Dendritic cell treated with granulocyte-macrophage colony-stimulating factor and Interleukin-4, amounts not matched to agents 40 ng/mL and 50 ng/mL, for 4 days (primary cell): ENCODE measurements at regions of chr7 and their contacts with region 1.

Region 1: GRCh38 chr7:134126966-134127848 is at the start of gene LRGUK:
- H3K4me3 Mint-ChIP-seq: peak within 1 kb of the TSS; percentile 73
- H3K27ac Mint-ChIP-seq: no peak within 1 kb of the TSS
- H3K4me1 Mint-ChIP-seq: peaks cover 32% of the 10 kb centered on the region
- H3K27me3 Mint-ChIP-seq: peaks cover 12% of the 10 kb centered on the region

Region 2: DNA sequence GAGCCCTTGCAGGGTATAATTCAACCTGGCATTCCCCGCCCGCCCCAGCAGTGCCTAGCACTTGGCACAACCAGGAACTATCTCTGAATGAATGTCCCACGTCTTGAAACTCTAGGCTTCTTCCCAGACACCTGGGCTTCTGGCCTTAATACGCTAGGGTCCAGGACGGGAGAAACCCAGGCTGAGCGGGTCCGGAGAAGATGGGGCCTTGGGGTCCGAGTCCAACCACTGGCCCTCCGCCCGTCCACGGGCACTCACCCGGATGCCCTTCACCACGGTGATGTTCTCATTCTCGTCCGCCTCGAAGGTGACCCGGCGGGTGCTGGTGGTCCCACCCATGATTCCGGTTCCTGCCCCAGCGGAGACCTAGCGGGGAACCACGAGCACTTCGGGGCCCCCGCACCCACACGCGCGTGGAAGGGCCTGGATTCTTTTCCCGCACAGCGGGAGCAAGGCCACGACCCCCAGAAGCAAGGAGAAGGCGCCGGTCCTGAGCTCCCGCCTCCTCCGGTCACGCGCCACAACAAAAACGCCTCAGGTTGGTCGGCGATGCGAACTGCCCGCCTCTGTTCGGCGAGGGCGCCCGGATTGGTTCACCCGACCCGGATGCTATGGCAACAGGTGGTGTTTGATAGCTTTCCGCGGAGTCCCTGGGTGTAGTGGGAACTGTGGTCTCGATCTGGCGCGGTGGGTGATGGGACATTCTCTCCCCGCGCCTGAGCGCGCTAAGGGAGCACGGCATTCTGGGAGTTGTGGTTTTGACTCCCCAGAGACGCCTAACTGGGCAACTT is 1045.4 kb before region 1 on chr7 and contains the start of gene CHCHD3:
- intact Hi-C with region 1: loop called (anchors 5 kb)
- H3K4me3 Mint-ChIP-seq: peak within 1 kb of the TSS; percentile 80
- H3K27ac Mint-ChIP-seq: peak within 1 kb of the TSS; percentile 93
- H3K4me1 Mint-ChIP-seq: peaks cover 19% of the 10 kb centered on the region
- H3K27me3 Mint-ChIP-seq: no peaks in the 10 kb centered on the region

Region 3: GRCh38 chr7:133252858-133253518 is 874.2 kb before region 1 on chr7 and contains the start of gene EXOC4:
- intact Hi-C with region 1: loop called (anchors 5 kb)
- H3K4me3 Mint-ChIP-seq: peak within 1 kb of the TSS; percentile 82
- H3K27ac Mint-ChIP-seq: peak within 1 kb of the TSS; percentile 97
- H3K4me1 Mint-ChIP-seq: peaks cover 26% of the 10 kb centered on the region
- H3K27me3 Mint-ChIP-seq: no peaks in the 10 kb centered on the region

Region 4: GRCh38 chr7:133936074-133936473 is 191.1 kb before region 1 on chr7:
- intact Hi-C with region 1: no loop called
- H3K4me3 Mint-ChIP-seq: no peak overlapping the region
- H3K27ac Mint-ChIP-seq: no peak overlapping the region
- H3K4me1 Mint-ChIP-seq: no peaks in the 10 kb centered on the region
- H3K27me3 Mint-ChIP-seq: no peaks in the 10 kb centered on the region

Region 5: DNA sequence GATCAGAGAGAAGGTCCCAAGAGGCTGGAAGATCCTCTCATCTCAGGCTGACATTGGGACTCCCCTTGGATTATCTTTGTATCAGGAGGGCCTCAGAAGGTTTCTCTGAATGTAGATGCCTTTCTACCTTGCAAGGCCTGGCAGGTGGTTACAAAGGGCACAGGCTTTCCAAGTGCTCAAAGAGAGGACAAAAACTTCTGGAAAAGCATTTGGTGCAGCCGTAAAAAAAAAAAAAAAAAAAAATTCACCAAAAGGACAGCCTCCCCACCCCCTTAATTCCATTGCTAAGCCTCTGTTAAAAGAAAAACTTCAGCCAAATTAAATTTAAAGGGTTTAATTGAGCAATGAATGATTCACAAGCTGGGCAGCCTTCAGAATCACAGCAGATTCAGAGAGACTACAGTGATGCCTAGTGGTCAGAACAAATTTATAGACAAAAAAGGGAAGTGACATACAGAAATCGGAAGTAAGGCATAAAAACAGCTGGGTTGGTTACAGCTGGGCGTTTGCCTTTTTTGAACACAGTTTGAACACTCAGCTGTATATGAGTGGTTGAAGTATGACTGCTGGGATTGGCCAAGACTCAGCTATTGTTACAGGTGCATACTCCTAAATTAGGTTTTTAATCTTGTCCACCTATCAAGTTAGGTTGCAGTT is 42.6 kb before region 1 on chr7:
- intact Hi-C with region 1: loop called (anchors 5 kb)
- H3K4me3 Mint-ChIP-seq: no peak overlapping the region
- H3K27ac Mint-ChIP-seq: peak overlapping the region; percentile 69
- H3K4me1 Mint-ChIP-seq: peaks cover 30% of the 10 kb centered on the region
- H3K27me3 Mint-ChIP-seq: peaks cover 8% of the 10 kb centered on the region

Region 6: GRCh38 chr7:134316539-134317344 is 189.5 kb after region 1 on chr7 and contains the start of gene SLC35B4:
- intact Hi-C with region 1: loop called (anchors 2 kb)
- H3K4me3 Mint-ChIP-seq: peak within 1 kb of the TSS; percentile 93
- H3K27ac Mint-ChIP-seq: peak within 1 kb of the TSS; percentile 87
- H3K4me1 Mint-ChIP-seq: peaks cover 12% of the 10 kb centered on the region
- H3K27me3 Mint-ChIP-seq: peaks cover 5% of the 10 kb centered on the region